Thyroid gland (tissue), 4 donors: ENCODE measurements at regions of chr12 and their contacts with region 1.

Region 1: DNA sequence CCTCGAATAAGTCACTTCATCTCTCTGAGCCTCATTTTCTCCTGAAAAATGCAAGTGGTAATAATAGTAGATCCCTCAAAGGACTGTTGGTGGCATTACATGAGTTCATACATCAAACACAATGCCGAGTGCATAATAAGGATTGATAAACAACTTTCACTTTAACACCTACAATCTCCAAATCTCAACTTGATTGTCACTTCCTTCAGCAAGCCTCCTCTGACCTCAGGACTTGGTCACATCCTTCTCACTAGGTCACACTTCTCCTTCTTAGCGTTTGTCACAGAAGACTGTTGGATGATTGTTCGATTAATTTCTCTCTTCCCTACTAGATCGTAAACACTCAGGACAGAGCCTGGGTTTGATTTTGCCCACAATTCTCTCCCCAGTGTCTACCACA is 7.9 kb upstream of the PRKAB1 start:
- DNase-seq: no peak
- H3K4me3 ChIP-seq: no peak overlapping the region
- H3K27ac ChIP-seq: no peak overlapping the region
- H3K4me1 ChIP-seq: no peaks in the 10 kb centered on the region
- H3K27me3 ChIP-seq: no peaks in the 10 kb centered on the region
- CTCF ChIP-seq: no peak
- POLR2A ChIP-seq: no peak

Region 2: DNA sequence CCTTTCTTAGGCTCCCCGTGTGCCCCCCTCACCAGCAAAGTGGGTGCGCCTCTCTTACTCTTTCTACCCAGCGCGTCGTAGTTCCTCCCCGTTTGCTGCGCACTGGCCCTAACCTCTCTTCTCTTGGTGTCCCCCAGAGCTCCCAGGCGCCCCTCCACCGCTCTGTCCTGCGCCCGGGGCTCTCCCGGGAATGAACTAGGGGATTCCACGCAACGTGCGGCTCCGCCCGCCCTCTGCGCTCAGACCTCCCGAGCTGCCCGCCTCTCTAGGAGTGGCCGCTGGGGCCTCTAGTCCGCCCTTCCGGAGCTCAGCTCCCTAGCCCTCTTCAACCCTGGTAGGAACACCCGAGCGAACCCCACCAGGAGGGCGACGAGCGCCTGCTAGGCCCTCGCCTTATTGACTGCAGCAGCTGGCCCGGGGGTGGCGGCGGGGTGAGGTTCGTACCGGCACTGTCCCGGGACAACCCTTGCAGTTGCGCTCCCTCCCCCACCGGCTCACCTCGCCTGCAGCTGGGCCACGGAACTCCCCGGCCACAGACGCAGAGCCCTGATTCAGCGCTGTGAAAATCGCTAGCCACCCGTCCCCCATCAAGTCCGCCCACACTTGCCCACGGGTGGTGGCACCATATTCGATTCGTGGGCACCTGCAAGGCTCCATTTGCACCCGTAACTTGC is 65.2 kb before region 1 on chr12:
- intact Hi-C with region 1: no loop called
- DNase-seq: peak; percentile 50 to 59
- H3K4me3 ChIP-seq: peak overlapping the region in 2 of 3 donors; percentile 31 to 50
- H3K27ac ChIP-seq: peak overlapping the region; percentile 35 to 96 (median 93)
- H3K4me1 ChIP-seq: peaks cover 7 to 27% of the 10 kb centered on the region in 2 donors
- H3K27me3 ChIP-seq: no peaks in the 10 kb centered on the region
- CTCF ChIP-seq: peak in 1 of 6 experiments; percentile 5
- POLR2A ChIP-seq: peak in 1 of 2 donors; percentile 80

Region 3: DNA sequence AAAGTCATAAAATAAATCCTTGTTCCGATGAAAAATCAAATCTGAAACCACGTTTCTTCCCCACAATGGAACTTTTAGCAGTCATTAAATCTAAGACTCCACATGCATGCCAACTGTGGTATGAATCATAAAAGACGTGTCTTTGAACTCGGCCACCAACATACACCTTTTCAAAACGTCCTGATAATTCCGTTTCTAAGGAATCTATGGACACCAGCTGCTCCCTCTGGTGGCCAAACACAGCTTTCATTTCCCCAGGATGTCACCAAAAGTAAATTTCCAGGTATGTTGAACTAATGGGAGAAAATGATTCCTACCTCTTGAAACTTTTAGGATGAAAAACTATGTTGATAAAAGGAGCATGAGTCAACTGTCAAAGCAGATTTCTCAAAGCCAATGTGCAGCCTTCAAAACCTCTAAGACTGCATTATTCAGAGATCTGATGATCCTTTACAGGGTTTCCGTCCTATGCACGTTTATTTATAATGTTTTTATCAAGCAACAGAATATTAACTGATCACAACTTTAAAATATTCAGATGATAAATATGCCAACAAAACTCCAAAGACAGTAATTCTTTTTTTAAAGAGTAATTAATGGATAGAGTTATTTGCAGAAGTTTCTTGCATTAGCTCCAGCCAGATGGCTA is 120.8 kb after region 1 on chr12:
- intact Hi-C with region 1: loop called (anchors 5 kb)
- DNase-seq: peak; percentile 71 to 73
- H3K4me3 ChIP-seq: no peak overlapping the region
- H3K27ac ChIP-seq: no peak overlapping the region
- H3K4me1 ChIP-seq: no peaks in the 10 kb centered on the region
- H3K27me3 ChIP-seq: no peaks in the 10 kb centered on the region
- CTCF ChIP-seq: peak in 5 of 6 experiments; percentile 76 to 86 (median 81)
- POLR2A ChIP-seq: no peak